ENCODE measurements at regions of chr6 and their contacts with region 1.

Region 1: DNA sequence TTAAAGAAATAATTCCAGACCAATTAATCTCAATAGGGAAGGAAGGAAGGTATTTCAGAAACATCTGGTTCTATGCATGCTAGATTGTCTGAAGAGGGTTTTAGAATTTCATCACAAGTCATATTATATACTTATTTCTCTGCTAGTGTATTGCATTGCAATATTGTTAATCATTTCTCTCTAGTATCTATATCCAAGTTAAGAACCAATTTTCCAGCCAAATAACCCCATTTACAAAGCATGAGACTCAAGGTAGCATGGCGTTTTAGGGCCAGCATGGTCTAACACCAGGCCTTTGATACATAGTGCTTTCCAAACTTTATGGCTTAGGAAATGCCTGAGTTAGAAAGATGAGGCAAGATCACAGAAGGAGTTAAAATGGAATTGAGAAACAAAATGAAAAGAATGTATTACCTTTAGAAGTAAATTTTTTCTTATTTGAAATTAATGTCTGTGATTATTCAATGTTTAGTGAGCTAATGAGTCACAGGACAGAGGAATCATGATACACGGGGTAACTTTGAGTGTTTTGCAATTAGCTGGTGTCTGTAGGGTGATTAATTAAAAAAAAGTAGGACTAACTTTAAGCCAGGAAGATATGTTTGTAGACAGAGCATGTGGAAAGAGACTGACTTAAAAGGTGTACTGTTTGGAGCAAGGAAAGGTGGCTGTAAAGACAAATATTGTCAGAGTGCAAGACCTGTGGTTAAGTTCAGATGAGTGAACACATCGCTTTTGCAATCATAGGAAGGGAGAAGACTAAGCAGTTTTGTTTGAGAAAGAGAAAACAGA is 1006.2 kb upstream of the CITED2 start:
- DNase-seq: no peak
- H3K4me3 ChIP-seq: no peak overlapping the region
- H3K27me3 ChIP-seq: no peaks in the 10 kb centered on the region
- CTCF ChIP-seq: no peak

Region 2: DNA sequence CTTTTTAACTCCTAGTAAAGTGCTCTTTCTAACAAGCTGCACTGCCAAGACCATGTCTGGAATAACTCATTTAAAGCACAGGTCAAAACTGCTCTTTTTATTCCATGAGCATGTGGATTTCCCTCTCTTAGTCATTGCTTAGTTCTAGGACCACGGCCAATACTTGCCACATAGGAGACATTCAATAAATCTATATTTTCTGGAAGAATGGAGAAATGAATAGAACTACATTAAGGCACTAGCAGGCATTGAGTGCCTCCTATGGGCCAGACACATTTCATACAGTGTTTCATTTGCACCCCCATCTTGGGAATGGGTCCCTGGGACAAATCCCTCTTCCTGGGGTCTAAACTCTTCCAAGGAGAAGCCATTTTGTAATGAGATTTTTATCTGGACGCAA is 453.4 kb before region 1 on chr6:
- CTCF ChIA-PET with region 1: no interaction called
- POLR2A ChIA-PET with region 1: no interaction called
- DNase-seq: no peak
- H3K4me3 ChIP-seq: no peak overlapping the region
- H3K27me3 ChIP-seq: no peaks in the 10 kb centered on the region
- CTCF ChIP-seq: peak; percentile 27; the same call in 1 of the 2 replicates

Region 3: DNA sequence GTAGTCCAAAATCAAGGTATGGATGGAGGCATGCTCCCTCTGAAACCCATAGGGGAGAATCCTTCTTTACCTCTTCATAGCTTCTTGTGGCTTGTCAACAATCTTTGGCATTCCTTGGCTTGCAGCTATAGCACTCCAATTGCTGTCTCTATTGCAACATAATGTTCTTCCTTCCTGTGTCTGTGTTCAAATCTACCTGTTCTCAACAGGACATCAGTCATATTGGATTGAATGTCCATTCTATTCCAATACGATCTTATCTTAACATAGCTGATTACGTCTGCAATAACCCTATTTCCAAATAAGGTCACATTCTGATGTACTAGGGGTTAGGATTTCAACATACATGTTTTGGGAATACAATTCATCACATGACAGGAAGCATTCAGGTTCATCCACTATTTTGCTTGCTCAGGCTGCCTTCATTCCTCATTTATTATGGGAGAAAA is 321.8 kb before region 1 on chr6:
- CTCF ChIA-PET with region 1: interaction called, 6 read pairs
- POLR2A ChIA-PET with region 1: interaction called, 19 read pairs
- DNase-seq: no peak
- H3K4me3 ChIP-seq: no peak overlapping the region
- H3K27me3 ChIP-seq: no peaks in the 10 kb centered on the region
- CTCF ChIP-seq: no peak

Region 4: DNA sequence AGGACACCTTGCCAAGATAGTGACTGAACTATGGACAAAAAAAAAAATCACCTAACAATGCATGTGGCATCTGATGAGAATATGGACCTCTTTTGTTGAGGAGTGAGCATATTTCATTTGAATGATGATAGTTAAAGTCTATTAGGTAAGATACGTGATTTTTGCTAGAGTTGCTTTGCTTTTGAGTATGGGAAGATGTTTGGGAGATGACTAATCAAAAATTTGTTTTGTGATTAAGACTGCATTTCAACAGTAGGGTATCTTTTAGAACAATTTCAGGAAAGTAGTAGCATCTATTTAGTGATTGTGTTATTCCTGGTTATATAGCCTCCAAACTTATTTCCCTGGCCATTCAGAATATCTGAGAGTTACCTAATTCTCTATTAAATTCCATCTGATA is 127.5 kb before region 1 on chr6:
- CTCF ChIA-PET with region 1: no interaction called
- POLR2A ChIA-PET with region 1: no interaction called
- DNase-seq: no peak
- H3K4me3 ChIP-seq: no peak overlapping the region
- H3K27me3 ChIP-seq: no peaks in the 10 kb centered on the region
- CTCF ChIP-seq: no peak

Region 5: DNA sequence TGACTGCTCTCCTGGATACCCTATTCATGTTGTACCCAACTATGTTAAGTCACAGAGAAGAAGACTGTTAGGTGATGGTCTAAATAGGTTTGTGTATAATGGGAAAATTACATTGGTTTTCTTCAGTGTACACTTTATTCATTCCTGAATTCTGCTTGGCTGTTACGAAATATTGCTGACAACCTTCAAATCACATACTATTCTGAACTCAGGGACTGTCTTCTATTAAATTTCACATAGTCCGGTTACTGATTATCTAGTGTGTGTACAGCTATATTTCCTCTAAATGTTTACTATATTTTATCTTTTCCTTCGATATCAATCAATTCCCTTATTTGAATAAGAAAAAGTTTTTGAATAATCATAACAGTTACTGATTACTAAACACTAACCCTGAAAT is 84.1 kb after region 1 on chr6:
- CTCF ChIA-PET with region 1: no interaction called
- POLR2A ChIA-PET with region 1: interaction called, 12 read pairs
- DNase-seq: no peak
- H3K4me3 ChIP-seq: no peak overlapping the region
- H3K27me3 ChIP-seq: no peaks in the 10 kb centered on the region
- CTCF ChIP-seq: no peak

Region 6: GRCh38 chr6:140711019-140711613 is 330.5 kb after region 1 on chr6:
- CTCF ChIA-PET with region 1: no interaction called
- POLR2A ChIA-PET with region 1: no interaction called
- DNase-seq: no peak
- H3K4me3 ChIP-seq: no peak overlapping the region
- H3K27me3 ChIP-seq: no peaks in the 10 kb centered on the region
- CTCF ChIP-seq: no peak